ENCODE measurements at regions of chr2 and their contacts with region 1.

Region 1: DNA sequence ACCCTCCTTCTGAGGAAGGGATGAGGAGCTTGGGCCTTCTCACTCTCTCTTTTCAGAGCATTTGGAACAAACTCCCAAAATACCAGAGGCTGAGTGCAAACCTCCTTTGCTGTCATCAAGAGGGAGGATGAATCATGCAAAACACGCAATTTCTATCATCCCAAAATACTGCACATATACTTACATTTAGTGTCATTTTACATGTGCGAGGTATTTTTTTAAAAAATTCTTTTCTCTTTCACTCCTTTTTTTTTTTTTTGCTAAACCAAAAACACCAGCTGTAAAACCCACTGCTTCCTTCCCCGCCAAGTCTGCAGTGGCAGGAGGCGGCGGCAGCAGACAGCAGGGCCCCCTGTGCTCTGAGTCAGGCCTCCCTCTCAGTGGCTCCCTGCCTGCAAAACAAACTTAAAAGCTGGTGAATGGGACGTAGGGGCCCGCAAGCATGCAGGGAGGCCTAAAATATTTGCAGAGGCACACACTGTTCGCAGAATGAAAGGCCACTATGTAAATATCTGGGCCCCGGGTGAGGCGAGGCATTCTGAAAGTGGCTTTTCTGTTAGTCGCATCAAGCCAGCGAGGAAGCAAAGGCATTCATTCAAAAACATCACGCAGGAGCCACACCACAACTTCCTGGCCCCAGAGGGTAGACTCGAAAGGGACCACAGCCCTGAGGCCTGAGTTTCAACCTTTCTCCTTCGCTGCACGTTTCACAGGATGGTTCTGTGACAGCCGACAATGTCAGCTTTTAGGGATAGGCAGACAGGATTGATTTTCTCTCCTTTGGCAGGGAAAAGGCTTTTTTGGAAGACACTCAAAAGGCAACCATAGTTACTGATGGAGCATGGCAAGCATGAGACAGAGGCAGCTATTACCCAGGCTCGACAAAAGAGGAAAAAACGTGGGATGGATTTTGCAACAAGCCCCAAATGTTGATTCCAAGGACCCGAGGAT is 73.4 kb downstream of the ACTR2 start:
- DNase-seq: peak; percentile 59
- H3K4me3 Mint-ChIP-seq: peak overlapping the region; percentile 58
- H3K27ac Mint-ChIP-seq: peak overlapping the region; percentile 94
- H3K4me1 Mint-ChIP-seq: peaks cover 53% of the 10 kb centered on the region
- H3K27me3 Mint-ChIP-seq: peaks cover 37% of the 10 kb centered on the region

Region 2: DNA sequence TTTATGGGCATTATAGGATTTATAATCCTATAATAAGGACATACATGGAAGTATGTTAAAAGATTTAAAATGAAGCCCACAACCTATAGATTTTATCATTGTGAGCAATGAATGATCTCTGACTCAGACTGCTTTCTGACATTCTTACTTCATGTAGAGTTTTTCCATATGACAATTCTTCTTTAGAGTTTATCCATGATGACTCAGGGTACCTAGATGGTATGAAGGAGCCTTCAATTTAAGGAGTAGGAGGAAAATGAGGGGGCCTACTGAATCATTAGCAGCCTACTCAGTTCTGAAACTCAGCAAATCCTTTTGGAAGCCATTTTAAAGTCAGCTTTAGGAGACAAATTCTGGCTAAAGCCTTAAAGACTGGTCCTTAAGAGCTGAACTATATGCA is 1167.2 kb before region 1 on chr2:
- intact Hi-C with region 1: loop called (anchors 5 kb)
- DNase-seq: no peak
- H3K4me3 Mint-ChIP-seq: peak overlapping the region; percentile 39
- H3K27ac Mint-ChIP-seq: peak overlapping the region; percentile 88
- H3K4me1 Mint-ChIP-seq: peaks cover 90% of the 10 kb centered on the region
- H3K27me3 Mint-ChIP-seq: no peaks in the 10 kb centered on the region

Region 3: DNA sequence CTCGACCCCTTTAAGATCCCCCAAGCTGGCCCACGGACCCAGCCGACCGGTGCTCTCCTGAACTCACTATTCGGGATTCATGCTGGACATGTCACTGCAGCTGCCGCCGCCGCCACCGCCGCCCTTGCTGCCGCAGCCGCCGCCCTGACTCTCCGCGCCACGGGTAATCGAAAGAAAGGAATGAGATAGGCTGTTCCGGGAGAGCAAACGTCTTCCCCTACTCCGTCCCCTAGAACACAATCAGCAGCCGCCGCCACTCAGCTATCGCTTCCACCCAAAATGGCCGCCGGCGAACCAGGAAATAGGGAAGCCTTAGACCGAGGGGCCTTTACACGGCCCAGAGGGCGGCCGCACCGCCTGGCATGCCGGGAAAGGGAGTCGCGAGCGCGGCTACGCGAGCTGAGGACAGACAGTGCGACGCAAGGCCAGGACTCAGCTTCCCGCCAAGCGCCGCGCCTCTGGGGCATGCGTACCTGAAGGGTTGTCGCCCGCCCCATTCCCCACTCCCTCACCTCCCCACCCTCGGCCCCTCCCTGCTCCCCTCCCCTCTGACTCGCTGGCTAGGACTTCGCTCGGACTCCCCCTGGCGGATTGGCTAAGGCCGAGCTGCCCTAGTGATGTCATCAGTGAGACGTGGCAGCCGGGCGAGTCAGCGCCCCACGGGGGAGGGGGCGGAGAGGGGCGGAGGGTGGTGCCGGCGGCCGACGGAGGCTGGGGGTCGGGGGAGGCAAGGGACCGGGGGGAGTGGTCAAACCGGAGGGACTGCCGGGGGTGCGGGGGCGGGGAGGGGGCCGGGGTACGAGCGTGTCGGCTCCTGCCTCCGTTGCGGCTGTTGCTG is 171.0 kb before region 1 on chr2 and contains the start of gene RAB1A:
- intact Hi-C with region 1: loop called (anchors 1 kb)
- DNase-seq: peak; percentile 98
- H3K4me3 Mint-ChIP-seq: peak within 1 kb of the TSS; percentile 98
- H3K27ac Mint-ChIP-seq: peak within 1 kb of the TSS; percentile 99
- H3K4me1 Mint-ChIP-seq: peaks cover 30% of the 10 kb centered on the region
- H3K27me3 Mint-ChIP-seq: peaks cover 16% of the 10 kb centered on the region
- total RNA-seq, gene RAB1A: 73.4 and 81.6 TPM in 2 replicates

Region 4: GRCh38 chr2:65264821-65265670 is 36.0 kb before region 1 on chr2:
- intact Hi-C with region 1: loop called (anchors 2 kb)
- DNase-seq: no peak
- H3K4me3 Mint-ChIP-seq: no peak overlapping the region
- H3K27ac Mint-ChIP-seq: no peak overlapping the region
- H3K4me1 Mint-ChIP-seq: peaks cover 17% of the 10 kb centered on the region
- H3K27me3 Mint-ChIP-seq: no peaks in the 10 kb centered on the region

Region 5: GRCh38 chr2:65329525-65329924 is 28.5 kb after region 1 on chr2:
- intact Hi-C with region 1: no loop called
- DNase-seq: no peak
- H3K4me3 Mint-ChIP-seq: no peak overlapping the region
- H3K27ac Mint-ChIP-seq: no peak overlapping the region
- H3K4me1 Mint-ChIP-seq: no peaks in the 10 kb centered on the region
- H3K27me3 Mint-ChIP-seq: no peaks in the 10 kb centered on the region

Region 6: GRCh38 chr2:65357095-65357958 is 56.3 kb after region 1 on chr2:
- intact Hi-C with region 1: loop called (anchors 1 kb)
- DNase-seq: no peak
- H3K4me3 Mint-ChIP-seq: no peak overlapping the region
- H3K27ac Mint-ChIP-seq: peak overlapping the region; percentile 24
- H3K4me1 Mint-ChIP-seq: peaks cover 71% of the 10 kb centered on the region
- H3K27me3 Mint-ChIP-seq: peaks cover 2% of the 10 kb centered on the region

Region 7: DNA sequence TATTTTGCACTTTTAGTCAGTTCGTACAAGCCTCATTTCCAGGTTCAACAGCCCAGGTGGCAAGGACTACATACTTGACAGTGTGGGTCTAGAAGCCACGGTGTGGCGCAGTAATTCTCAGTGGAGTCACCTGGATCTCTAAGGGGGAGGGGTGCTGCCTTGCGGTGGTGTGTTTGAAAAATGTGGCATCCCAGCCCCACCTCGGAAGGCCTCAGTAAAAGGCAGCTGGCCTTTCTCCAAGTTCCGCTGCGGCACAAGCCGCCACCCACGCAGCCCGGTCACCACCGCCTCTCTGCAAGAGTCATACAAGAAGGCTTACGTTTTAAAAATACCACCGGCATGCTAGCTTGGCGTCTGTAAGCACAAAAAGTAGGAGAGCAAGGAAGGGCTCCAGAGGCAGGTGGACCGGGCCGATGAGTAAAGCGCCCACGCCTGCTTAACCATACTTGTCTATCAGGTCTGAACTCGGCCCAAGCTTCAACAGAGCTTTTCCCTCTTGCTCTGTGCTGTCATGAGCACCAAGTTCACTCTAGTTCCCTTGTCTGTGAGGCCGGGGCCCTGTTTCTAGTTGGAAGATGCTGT is 81.8 kb after region 1 on chr2:
- intact Hi-C with region 1: loop called (anchors 1 kb)
- DNase-seq: peak; percentile 63
- H3K4me3 Mint-ChIP-seq: peak overlapping the region; percentile 56
- H3K27ac Mint-ChIP-seq: peak overlapping the region; percentile 62
- H3K4me1 Mint-ChIP-seq: peaks cover 67% of the 10 kb centered on the region
- H3K27me3 Mint-ChIP-seq: peaks cover 7% of the 10 kb centered on the region

Region 8: DNA sequence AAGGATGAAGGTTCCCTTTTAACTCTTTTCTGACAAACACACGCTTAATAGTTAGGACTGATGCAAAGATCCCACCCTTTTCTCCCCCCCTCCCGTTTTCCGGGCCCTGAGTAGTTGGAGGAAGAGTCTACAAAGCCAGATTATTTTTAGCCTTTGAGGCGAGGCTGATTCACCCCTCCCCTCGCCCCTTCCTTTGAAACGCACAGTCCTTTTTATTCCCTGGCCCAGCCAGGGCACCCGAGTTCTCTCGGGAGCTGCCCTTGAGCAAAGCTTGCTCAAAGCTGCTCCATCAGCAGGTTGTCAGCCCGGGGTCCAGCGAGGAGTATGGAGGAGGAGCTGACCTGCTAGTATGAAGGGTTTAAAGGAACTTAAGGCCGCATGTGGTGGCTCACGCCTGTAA is 178.5 kb after region 1 on chr2:
- intact Hi-C with region 1: no loop called
- DNase-seq: no peak
- H3K4me3 Mint-ChIP-seq: no peak overlapping the region
- H3K27ac Mint-ChIP-seq: no peak overlapping the region
- H3K4me1 Mint-ChIP-seq: no peaks in the 10 kb centered on the region
- H3K27me3 Mint-ChIP-seq: peaks cover 8% of the 10 kb centered on the region

Region 9: DNA sequence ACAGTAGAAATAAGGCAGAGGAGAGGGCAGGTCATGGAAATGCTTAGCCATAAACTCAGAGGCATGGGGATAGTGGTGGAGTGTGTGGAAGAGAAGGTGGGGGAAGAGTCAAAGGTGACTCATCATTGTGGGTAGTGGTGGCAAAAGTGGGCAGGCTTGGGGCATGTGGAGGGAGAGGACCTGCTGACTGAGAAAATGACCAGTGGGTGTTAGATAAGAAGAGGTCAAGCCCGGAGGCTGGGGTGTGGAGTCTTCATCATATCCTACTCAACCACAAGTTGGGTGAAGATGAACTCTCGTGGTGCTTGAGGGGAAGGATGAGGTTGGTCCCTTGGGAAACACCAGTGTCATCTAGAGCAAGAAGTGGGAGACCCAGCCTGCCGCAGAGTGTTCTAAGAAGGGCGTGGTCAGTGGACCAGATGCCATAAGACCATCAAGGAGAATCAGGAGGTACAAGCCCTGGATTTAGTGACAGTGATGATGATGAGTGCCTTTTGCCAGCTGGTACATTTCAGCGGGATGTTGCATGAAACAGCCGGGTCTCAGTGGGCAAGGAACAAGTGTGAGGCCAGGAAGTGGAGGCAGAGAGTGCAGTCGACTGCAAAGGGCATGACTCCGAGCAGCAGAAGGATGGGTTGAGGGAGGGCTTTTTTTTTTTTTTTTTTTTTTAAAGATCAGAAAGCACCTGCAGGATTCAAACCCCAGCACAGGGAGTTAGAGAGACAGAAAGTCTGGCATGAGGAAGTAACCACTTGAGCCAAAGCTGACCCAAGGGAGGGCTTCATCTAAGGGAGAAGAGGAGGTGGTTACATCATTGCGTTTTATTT is 253.9 kb after region 1 on chr2:
- intact Hi-C with region 1: loop called (anchors 1 kb)
- DNase-seq: no peak
- H3K4me3 Mint-ChIP-seq: peak overlapping the region; percentile 6
- H3K27ac Mint-ChIP-seq: peak overlapping the region; percentile 38
- H3K4me1 Mint-ChIP-seq: peaks cover 16% of the 10 kb centered on the region
- H3K27me3 Mint-ChIP-seq: peaks cover 30% of the 10 kb centered on the region